ENCODE measurements at regions of chr7 and their contacts with region 1.

Region 1: DNA sequence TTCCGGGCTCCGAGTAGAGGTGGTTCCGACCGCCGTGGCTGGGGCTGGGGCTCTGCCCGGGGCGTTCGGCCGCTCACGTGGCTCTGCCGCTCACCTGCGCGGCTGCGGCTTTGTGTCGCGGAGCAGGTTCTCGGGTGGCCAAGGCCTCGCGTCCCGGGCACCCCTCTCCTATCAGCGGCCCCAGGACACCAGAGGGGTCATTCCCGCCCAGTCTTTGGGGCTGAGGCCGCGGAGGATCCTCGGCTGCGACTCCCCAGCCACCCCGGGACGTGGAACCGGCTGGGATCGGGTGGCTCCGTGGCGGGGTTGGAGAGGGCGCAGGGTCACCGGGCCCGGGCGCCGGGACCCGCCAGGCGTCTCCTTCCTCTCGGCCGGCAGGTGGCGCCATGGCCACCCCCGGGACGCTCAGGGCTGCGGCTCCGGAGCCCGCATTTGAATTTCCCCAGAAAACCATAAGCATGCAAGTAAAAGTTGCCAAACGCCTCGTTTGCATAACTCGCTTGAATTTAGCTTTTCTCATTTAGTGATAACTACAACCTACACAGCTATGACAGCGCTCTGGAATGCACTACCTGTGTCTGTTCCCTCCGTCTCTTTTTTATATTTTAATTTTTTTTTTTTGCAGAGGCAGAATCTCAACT is 1.2 kb downstream of the COL26A1 start:
- DNase-seq: peak; percentile 70 to 89
- ATAC-seq: peak; percentile 91
- H3K4me3 ChIP-seq: peak overlapping the region in 1 of 2 donors; percentile 27
- H3K27ac ChIP-seq: no peak overlapping the region
- H3K4me1 ChIP-seq: no peaks in the 10 kb centered on the region
- H3K27me3 ChIP-seq: no peaks in the 10 kb centered on the region

Region 2: DNA sequence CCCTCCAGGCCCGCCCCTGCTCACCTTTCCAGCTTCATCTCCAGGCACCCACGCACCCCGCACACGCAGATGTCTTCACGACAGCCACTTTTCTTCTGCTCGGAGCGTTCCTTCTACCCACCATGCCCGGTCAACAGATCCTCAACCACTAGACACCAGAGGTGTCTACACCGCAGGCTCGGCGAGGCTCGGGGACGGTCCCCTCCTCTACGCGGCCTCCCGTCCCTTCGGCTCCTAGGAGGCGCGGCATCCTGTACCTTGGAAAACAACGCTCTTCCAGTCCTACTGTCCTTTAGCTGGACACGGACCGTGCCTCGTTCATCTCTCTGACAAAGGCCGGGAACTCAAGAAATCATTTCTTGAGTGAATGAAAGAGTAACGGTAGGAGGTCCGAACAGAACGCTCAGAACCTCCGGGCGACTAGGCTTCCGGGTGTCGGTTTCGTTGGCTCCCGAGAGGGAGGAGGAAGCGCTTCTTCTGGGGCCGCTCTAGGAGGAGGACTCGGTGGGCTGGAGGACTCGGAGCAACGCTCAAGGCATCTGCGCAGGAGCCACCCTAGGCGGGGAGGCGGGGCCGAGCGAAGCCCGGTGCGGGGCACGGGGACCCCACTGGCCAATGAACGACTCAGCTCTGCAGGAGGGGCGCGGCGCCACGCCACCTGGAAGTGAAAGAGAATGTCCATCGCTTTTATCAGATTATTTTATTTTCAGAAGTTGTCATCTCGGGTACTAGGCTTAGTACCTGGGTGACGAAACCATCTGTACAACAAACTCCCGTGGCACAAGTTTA is 111.8 kb before region 1 on chr7:
- intact Hi-C with region 1: no loop called
- DNase-seq: peak; percentile 99 to 100
- ATAC-seq: peak; percentile 100
- H3K4me3 ChIP-seq: peak overlapping the region; percentile 55 to 57
- H3K27ac ChIP-seq: no peak overlapping the region
- H3K4me1 ChIP-seq: no peaks in the 10 kb centered on the region
- H3K27me3 ChIP-seq: no peaks in the 10 kb centered on the region

Region 3: GRCh38 chr7:101542527-101543241 is 178.8 kb after region 1 on chr7:
- intact Hi-C with region 1: loop called (anchors 2 to 5 kb)
- DNase-seq: peak in 1 of 2 donors; percentile 86
- ATAC-seq: peak; percentile 59
- H3K4me3 ChIP-seq: no peak overlapping the region
- H3K27ac ChIP-seq: no peak overlapping the region
- H3K4me1 ChIP-seq: no peaks in the 10 kb centered on the region
- H3K27me3 ChIP-seq: no peaks in the 10 kb centered on the region